ENCODE measurements at regions of chr3 and their contacts with region 1.

Region 1: GRCh38 chr3:121834696-121835464 is at the starts of genes EAF2 and IQCB1:
- DNase-seq: peak; percentile 94 to 98
- ATAC-seq: peak; percentile 100
- H3K4me3 ChIP-seq: peak within 1 kb of the TSS; percentile 89
- H3K27ac ChIP-seq: peak within 1 kb of the TSS; percentile 83
- H3K4me1 ChIP-seq: peaks cover 18% of the 10 kb centered on the region
- H3K27me3 ChIP-seq: no peaks in the 10 kb centered on the region
- CTCF ChIP-seq: peak; percentile 2
- total RNA-seq, gene EAF2: 1.5 to 5.3 (median 5.0) TPM
- total RNA-seq, gene IQCB1: 5.8 to 8.3 (median 6.8) TPM

Region 2: DNA sequence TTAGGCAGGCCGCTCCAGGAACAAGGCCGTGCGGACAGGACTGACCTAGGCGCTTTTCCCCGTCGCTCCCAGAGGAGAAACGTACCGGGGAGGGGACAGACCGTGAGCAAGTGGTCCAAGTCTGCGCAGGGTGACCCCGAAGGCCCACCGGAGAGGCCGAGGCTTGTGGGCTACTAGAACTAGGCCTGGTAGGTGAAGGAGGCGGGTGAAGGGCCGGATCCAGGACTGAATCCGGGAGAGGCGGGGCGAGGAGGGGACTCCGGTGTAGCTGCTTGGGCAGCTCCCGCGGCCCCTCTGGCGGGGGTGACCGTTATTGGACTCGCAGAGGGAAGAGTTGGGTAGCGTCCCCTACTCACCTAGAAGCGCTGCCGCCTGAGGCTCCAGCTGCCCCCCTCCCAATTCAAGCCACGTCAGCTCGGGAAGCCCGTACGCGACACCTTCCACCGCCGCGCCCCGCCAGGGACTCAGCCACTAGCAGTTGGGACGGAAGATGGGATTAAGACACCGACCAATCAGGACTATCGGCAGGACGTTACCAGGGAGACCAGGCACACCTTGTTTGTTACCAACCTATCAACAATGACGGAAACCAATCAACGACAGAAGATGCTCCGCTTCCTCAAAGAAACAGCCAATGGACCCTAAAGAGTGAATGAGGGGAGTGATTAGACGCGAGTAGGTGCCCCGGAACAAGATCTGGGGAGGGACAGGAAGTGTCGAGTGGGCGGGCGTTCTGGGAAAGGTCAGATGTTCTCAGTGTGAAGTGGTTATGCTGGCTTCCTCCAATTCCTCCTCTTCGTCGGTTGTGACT is 85.4 kb before region 1 on chr3 and contains the start of gene GOLGB1:
- intact Hi-C with region 1: loop called in 1 of 2 experiments (anchors 5 kb)
- DNase-seq: peak; percentile 93 to 95
- ATAC-seq: peak; percentile 98
- H3K4me3 ChIP-seq: peak within 1 kb of the TSS; percentile 97
- H3K27ac ChIP-seq: peak within 1 kb of the TSS; percentile 98
- H3K4me1 ChIP-seq: peaks cover 22% of the 10 kb centered on the region
- H3K27me3 ChIP-seq: no peaks in the 10 kb centered on the region
- CTCF ChIP-seq: no peak
- total RNA-seq, gene GOLGB1: 20.6 to 30.7 (median 23.6) TPM

Region 3: GRCh38 chr3:122383771-122384697 is 549.2 kb after region 1 on chr3 and contains the start of gene FAM162A:
- intact Hi-C with region 1: loop called in 1 of 2 experiments (anchors 10 kb)
- DNase-seq: peak; percentile 95 to 97
- ATAC-seq: peak; percentile 96 to 98 (median 96)
- H3K4me3 ChIP-seq: peak within 1 kb of the TSS; percentile 81
- H3K27ac ChIP-seq: peak within 1 kb of the TSS; percentile 96
- H3K4me1 ChIP-seq: peaks cover 17% of the 10 kb centered on the region
- H3K27me3 ChIP-seq: no peaks in the 10 kb centered on the region
- CTCF ChIP-seq: peak; percentile 49
- total RNA-seq, gene FAM162A: 42.4 to 98.4 (median 60.0) TPM